Activated T-helper 2 cell treated with anti-CD3 and anti-CD28 coated beads, Interferon-gamma antibody, Interleukin-2, Interleukin-4, amounts not matched to agents 10 μg/mL and 5 μg/mL and 100 μg/mL, durations not matched to agents 14 hours and 24 hours and 36 hours (primary cell): ENCODE measurements at regions of chr9 and their contacts with region 1.

Region 1: GRCh38 chr9:97398999-97399758 is 12.7 kb upstream of the TDRD7 start:
- DNase-seq: peak; percentile 45
- H3K4me3 Mint-ChIP-seq: no peak overlapping the region
- H3K27ac Mint-ChIP-seq: no peak overlapping the region
- H3K4me1 Mint-ChIP-seq: peaks cover 10% of the 10 kb centered on the region
- H3K27me3 Mint-ChIP-seq: peaks cover 35% of the 10 kb centered on the region

Region 2: GRCh38 chr9:97237951-97238851 is 161.0 kb before region 1 on chr9:
- intact Hi-C with region 1: loop called (anchors 5 kb)
- DNase-seq: peak; percentile 74
- H3K4me3 Mint-ChIP-seq: peak overlapping the region; percentile 93
- H3K27ac Mint-ChIP-seq: peak overlapping the region; percentile 91
- H3K4me1 Mint-ChIP-seq: peaks cover 20% of the 10 kb centered on the region
- H3K27me3 Mint-ChIP-seq: peaks cover 2% of the 10 kb centered on the region

Region 3: DNA sequence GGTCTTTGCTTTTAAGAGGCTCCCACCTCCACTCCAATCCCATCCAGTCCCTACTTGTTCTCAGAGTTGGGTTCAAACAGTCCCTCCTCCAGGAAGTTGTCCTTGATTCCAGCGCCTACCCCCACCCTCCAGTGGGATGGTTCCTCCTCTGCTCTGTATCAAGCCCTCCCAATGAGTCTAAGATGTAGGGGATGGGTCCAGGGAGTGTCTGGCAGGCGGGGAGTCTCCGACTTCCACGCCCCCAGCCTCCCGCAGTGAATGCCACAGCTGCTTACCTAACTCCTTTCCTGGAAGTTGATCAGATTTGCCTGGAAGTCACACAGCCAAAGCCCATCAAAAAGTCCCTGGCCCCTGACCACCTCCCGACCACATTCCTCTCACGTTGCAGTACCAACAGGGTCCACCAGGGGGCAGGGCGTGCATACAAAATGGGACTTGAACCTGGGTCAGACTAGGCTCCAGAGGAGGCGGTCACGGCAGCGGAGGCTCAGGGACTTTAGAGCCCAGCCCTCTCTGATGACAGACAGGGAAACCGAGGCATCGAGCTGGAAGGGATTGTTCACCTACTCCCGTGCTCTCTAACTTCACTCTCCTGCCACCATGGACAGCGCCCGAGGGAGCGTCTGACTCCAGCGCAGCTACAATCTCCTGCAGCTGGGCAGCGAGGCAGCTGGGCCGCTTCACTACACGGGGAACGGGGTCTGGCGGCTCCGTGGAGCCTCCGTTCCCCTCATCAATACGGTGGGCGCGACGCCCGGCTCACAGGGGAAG is 12.3 kb before region 1 on chr9:
- intact Hi-C with region 1: loop called (anchors 1 kb)
- DNase-seq: peak; percentile 56
- H3K4me3 Mint-ChIP-seq: no peak overlapping the region
- H3K27ac Mint-ChIP-seq: no peak overlapping the region
- H3K4me1 Mint-ChIP-seq: peaks cover 13% of the 10 kb centered on the region
- H3K27me3 Mint-ChIP-seq: peaks cover 21% of the 10 kb centered on the region

Region 4: GRCh38 chr9:97591535-97591934 is 192.4 kb after region 1 on chr9:
- intact Hi-C with region 1: no loop called
- DNase-seq: no peak
- H3K4me3 Mint-ChIP-seq: no peak overlapping the region
- H3K27ac Mint-ChIP-seq: no peak overlapping the region
- H3K4me1 Mint-ChIP-seq: no peaks in the 10 kb centered on the region
- H3K27me3 Mint-ChIP-seq: peaks cover 2% of the 10 kb centered on the region

Region 5: GRCh38 chr9:97615439-97616072 is 216.4 kb after region 1 on chr9:
- intact Hi-C with region 1: loop called (anchors 1 kb)
- DNase-seq: peak; percentile 29
- H3K4me3 Mint-ChIP-seq: no peak overlapping the region
- H3K27ac Mint-ChIP-seq: no peak overlapping the region
- H3K4me1 Mint-ChIP-seq: peaks cover 17% of the 10 kb centered on the region
- H3K27me3 Mint-ChIP-seq: no peaks in the 10 kb centered on the region